ENCODE measurements at regions of chr19 and their contacts with region 1.

Region 1: DNA sequence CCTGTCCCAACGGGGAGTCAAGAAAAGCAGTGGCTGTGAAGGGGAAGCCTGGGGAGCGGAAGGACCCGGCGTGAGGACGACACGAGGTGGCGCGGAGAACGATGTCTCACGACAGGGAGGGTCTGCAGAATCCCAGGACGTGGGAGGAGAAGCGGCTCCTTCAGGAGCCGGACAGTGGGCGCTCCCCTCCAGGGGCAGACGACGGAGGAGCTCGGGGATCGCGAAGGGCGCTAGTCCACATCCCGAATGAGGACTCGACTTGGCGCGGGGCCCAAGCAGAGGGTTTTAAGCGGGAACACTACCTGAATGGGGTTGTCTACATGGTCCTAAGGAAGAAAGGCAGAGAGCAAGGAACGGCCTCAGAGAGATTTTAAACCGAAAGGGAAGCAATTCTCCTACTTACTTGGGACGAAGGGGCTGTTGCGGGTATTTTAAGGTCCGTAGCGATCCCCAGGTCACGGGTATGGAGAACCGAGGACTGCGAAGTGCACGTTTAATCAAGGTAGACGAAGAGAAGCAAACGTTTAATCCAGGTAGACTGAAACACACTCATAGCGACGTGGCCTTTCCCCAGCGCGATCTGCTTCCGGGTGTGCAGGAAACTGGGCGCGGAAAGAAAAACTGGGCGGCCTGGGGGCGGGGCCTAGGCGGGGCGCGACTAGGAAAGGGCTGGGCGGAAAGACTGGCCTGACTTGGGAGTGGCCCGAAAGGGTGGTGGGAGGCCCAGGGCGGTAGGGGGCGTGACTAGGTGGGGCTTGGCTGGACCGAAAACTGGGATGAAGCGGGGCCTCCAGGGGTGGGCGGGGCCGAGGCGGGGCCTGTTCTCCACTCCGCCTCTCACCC is at the start of gene ZNF841:
- DNase-seq: peak; percentile 94
- H3K4me3 ChIP-seq: peak within 1 kb of the TSS; percentile 55 to 95 (median 82)
- H3K27ac ChIP-seq: peak within 1 kb of the TSS; percentile 60 to 85 (median 80)
- H3K4me1 ChIP-seq: peaks cover 4 to 21% (median 11%) of the 10 kb centered on the region in 4 donors
- H3K27me3 ChIP-seq: no peaks in the 10 kb centered on the region
- CTCF ChIP-seq: no peak
- EP300 ChIP-seq: no peak
- POLR2A ChIP-seq: peak; percentile 66
- total RNA-seq, gene ZNF841: 15.7 to 23.7 (median 21.1) TPM

Region 2: DNA sequence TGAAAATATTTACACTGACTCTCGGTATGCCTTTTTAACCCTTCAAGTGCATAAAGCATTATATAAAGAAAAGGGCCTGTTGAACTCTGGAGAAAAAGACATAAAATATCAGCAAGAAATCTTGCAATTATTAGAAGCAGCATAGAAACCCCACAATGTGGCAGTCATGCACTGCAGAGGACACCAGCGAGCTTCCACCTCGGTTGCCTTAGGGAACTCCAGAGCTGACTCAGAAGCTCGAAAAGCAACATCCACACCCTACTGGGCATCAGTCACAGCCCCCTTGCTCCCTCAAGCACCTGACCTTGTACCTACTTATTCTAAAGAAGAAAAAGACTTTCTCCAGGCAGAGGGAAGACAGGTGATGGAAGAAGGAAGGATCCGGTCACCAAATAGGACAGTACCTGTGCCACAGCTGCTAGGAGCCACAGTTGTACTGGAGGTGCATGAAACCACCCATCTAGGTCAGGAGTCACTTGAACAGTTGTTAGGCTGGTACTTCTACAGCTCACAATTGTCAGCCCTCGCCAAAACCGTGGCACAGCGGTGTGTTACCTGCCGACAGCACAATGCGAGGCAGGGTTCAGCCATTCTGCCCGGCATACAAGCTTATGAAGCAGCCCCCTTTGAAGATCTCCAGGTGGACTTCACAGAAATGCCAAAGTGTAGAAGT is 864.4 kb after region 1 on chr19:
- in situ Hi-C with region 1: loop called in 1 of 4 experiments (anchors 10 kb)
- intact Hi-C with region 1: no loop called
- DNase-seq: no peak
- H3K4me3 ChIP-seq: no peak overlapping the region
- H3K27ac ChIP-seq: no peak overlapping the region
- H3K4me1 ChIP-seq: peaks cover 10 to 19% (median 13%) of the 10 kb centered on the region in 4 donors
- H3K27me3 ChIP-seq: no peaks in the 10 kb centered on the region
- CTCF ChIP-seq: no peak
- EP300 ChIP-seq: no peak
- POLR2A ChIP-seq: no peak

Measured in transverse colon (tissue), 4 donors.